GM10248 (cell line): ENCODE measurements at regions of chr2 and their contacts with region 1.

Region 1: GRCh38 chr2:100381240-100381639 is 36.2 kb downstream of the CHST10 start:
- DNase-seq: peak; percentile 64
- CTCF ChIP-seq: peak; percentile 73

Region 2: DNA sequence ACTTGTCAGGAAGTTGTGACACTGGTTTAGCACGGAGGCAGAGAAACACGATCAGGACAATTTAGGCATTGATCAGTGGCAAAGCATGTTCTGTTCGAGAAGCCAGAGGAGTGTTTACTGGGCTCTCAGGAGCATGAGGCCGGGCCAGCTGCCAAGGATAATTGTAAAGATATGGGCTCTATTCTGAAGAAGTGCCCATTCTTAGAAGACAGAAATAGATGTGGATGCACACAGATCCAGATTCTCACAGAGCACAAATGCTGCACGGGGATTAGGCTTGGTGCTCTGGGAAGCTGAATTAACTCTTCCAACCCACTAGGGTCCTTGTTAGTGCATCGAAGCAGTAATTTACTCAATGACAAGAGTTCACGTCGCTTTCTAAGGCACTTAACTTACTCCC is 255.0 kb before region 1 on chr2:
- CTCF ChIA-PET with region 1: no interaction called
- POLR2A ChIA-PET with region 1: no interaction called
- DNase-seq: no peak
- CTCF ChIP-seq: no peak

Region 3: GRCh38 chr2:100365434-100365833 is 15.8 kb before region 1 on chr2:
- CTCF ChIA-PET with region 1: interaction called, 51 read pairs
- POLR2A ChIA-PET with region 1: no interaction called
- DNase-seq: no peak
- CTCF ChIP-seq: no peak

Region 4: DNA sequence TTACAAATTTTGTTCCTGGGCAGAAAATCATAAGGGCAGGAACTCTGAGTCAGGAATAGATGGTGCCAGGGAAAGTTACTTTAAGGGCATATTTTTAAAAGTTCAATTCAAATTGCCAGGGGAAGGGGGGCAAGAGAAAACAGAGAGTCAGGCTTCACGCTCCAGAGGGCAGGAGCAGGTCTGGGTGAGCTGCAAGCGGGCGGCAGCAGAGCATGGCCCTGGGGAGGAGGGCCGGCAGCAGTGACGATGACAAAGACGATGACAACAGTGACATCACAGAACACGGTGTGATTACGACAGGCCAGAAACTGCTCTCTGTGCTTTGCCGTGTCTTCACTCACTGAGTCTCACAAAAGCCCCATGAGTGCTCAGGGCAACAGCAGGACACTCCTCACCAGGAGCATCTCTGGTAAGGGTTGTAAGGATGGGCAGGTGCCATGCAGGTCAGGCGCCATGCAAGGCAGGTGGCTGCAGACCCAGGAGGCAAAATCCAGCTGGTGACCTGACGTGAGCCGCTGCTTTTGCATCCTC is 12.9 kb after region 1 on chr2:
- CTCF ChIA-PET with region 1: interaction called, 72 read pairs
- POLR2A ChIA-PET with region 1: no interaction called
- DNase-seq: peak; percentile 77
- CTCF ChIP-seq: no peak

Region 5: GRCh38 chr2:100554798-100555407 is 173.7 kb after region 1 on chr2:
- CTCF ChIA-PET with region 1: no interaction called
- POLR2A ChIA-PET with region 1: no interaction called
- DNase-seq: no peak
- CTCF ChIP-seq: no peak